Motor neuron (in vitro differentiated cells): ENCODE measurements at regions of chr4 and their contacts with region 1.

Region 1: DNA sequence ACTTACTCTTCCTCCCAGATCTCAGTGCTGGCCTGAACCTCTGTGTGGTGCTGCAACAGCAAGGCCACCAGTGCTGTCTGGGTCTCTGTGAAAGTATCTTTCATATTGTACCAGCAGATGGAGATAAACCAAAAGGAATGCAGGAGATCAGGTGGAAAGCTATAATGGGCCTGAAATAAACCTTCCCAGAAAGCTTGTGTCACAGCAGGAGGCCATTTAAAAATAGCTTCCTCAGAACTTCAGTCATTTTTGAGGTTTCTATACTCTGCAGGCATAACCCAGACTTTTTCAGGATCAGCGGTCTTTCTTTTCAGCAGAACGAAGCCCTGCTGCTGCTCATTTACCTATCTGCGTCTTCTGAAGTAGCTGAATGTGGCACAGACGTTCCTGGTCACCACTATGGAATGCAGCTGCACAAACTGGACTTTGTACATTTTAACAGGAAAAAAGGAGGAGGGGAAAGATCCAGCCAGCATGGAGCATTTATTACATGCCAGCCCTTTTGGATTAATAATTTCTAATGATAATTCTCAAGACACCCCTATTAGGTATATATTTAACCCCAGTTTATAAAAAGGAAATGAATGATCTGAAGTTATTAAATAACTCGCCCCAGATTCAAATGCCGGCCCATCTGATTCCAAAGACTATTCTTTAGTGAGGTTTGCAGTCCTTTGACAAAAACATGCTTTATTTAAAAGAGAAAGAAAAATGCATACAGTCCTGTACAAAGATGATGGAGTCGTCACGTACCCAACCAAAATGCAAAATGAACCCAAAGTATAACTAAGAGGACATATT is 119.7 kb downstream of the NFKB1 start:
- ATAC-seq: peak; percentile 78 to 95 (median 87)
- H3K4me3 ChIP-seq: no peak overlapping the region
- H3K27ac ChIP-seq: no peak overlapping the region
- H3K4me1 ChIP-seq: no peaks in the 10 kb centered on the region

Region 2: GRCh38 chr4:101630319-101630986 is 990.4 kb before region 1 on chr4:
- in situ Hi-C with region 1: no loop called
- ATAC-seq: no peak
- H3K4me3 ChIP-seq: no peak overlapping the region
- H3K27ac ChIP-seq: no peak overlapping the region
- H3K4me1 ChIP-seq: no peaks in the 10 kb centered on the region

Region 3: DNA sequence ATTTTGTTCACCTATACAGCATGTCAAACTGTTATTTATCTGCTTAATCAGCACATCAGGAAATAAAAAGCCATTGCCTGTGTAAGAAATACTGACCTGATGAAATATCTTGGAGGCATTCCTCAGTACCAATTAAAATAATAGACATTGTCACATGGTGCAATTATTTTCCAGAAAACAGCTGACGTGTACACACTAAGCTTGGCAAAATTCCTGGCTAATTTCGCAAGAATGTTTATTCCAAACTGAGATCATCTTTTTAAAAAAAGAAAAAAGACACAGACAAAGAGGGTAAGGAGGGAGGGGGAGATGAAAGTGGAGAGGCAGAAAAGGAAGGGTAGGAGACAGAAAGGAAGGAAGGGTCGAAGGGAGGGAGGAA is 181.7 kb before region 1 on chr4:
- in situ Hi-C with region 1: no loop called
- ATAC-seq: peak; percentile 61 to 86 (median 72)
- H3K4me3 ChIP-seq: no peak overlapping the region
- H3K27ac ChIP-seq: peak overlapping the region in 1 of 2 donors; percentile 25
- H3K4me1 ChIP-seq: peaks cover 4 to 14% of the 10 kb centered on the region in 2 donors

Region 4: DNA sequence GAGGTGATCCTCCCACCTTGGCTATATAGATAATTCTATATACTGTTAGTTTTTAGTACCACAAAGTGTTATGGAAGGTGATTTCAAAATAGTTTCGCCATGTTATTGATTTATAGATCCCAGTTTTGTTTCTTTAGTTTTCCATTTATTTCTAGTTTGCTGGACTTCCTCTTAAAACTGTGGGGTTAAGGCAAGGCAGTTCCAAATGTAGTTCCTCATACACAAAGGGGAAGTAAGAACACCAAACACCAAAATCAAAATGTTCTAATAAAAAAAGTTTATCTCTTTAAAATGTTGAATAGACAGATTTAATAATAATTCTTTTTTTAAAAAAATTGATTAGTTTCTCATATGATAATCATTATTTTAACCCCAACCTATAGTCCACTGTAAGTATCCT is 241.1 kb after region 1 on chr4:
- in situ Hi-C with region 1: no loop called
- ATAC-seq: no peak
- H3K4me3 ChIP-seq: no peak overlapping the region
- H3K27ac ChIP-seq: no peak overlapping the region
- H3K4me1 ChIP-seq: peaks cover 0 to 6% of the 10 kb centered on the region in 2 donors

Region 5: DNA sequence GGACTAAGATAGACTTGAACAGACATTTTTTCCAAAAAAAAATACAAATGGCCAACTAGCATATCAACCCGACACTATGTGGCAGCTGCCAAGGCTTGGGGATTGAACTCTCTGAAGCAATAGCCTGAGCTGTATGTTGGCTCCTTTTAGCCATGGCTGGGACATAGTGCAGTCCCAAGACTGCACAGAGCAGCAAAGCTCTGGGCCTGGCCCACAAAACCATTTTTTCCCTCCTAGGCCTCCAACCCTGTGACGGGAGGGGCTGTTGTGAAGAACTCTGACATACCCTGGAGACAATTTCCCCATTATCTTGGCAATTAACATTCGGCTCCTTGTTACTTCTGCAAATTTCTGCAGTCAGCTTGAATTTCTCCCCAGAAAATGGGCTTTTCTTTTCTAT is 298.0 kb after region 1 on chr4:
- in situ Hi-C with region 1: no loop called
- ATAC-seq: no peak
- H3K4me3 ChIP-seq: no peak overlapping the region
- H3K27ac ChIP-seq: no peak overlapping the region
- H3K4me1 ChIP-seq: no peaks in the 10 kb centered on the region

Region 6: DNA sequence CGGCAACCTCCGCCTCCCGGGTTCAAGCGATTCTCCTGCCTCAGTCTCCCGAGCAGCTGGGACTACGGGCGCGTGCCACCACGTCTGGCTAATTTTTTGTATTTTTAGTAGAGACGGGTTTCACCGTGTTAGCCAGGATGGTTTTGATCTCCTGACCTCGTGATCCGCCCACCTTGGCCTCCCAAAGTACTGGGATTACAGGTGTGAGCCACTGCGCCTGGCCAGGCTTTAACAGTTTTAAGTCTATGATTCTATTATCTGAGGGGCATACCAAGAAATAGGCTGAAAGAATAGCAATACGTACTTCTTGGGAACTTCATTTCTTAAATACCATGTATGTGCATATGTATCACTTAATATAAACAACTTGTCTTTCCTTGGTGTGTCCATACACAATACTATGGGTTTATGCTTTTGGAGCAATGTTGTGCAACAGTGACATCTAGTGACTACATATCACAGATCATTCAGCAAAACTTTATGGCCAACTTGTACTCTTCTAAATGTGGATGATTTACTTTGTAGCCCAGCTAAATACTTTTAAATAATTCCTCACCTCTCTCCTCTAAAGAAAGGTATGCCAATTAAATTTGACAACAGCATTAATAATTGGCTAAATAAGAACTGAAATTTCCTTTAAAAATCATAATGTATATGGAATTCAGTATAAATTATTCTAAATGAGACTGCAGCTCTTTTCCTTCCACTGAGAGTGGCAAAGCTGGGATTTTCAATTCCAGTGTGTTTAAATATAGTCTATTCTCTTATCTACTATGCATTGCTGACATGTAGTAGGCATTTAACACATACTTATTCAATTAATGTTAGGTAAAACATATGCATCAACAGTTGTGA is 388.2 kb after region 1 on chr4:
- in situ Hi-C with region 1: loop called in 3 of 9 experiments (anchors 10 to 25 kb)
- ATAC-seq: peak; percentile 42 to 82 (median 64)
- H3K4me3 ChIP-seq: no peak overlapping the region
- H3K27ac ChIP-seq: no peak overlapping the region
- H3K4me1 ChIP-seq: no peaks in the 10 kb centered on the region

Region 7: DNA sequence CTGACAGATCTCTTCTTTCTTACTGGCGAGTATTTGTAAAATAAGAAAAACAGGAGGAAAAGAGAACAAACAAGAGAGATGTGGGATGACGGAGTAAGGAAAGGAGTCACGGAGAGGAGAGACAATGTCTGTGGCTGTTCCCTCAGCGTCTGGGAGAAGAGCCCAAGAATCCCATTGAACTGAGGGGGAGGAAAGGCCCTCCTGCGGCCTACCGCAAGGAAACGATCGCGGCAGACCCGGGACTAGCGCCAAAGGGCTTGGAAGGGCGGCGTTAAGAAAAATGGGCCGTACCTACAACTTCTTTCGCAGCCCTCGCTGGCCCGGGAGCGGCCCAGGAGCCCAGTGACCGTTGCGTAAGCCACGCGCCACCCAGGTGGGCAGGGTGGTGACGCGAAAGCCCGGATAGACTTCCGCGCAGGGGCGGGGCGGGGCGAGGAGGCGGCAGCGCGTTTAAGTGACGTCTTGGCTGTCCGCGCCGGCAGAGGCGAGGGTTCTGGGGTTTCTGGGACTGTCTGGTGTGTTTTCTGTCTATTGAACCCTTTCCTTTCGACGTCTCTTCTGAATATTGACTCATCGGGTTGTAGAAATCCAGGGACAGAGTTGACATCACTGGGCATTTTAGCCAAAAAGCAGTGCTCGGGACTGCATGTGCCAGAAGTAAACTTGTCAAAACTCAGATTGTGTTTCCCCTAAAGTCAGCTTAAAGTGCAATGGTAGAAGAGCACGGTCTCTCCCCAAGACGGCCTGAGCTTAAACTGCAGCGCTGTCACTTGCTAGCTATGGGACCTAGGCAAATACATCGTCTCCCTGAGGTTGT is 398.6 kb after region 1 on chr4 and contains the start of gene SLC9B1:
- in situ Hi-C with region 1: loop called in 1 of 9 experiments (anchors 25 kb)
- ATAC-seq: peak; percentile 57 to 99 (median 93)
- H3K4me3 ChIP-seq: peak within 1 kb of the TSS in 3 of 5 donors; percentile 16 to 27 (median 23)
- H3K27ac ChIP-seq: no peak within 1 kb of the TSS
- H3K4me1 ChIP-seq: no peaks in the 10 kb centered on the region
- total RNA-seq, gene SLC9B1: 0.28 to 9.1 (median 0.81) TPM

Region 8: GRCh38 chr4:103099691-103100392 is 478.9 kb after region 1 on chr4 and contains the start of gene BDH2:
- in situ Hi-C with region 1: loop called in 1 of 9 experiments (anchors 25 kb)
- ATAC-seq: peak; percentile 90 to 96 (median 93)
- H3K4me3 ChIP-seq: peak within 1 kb of the TSS; percentile 31 to 40 (median 35)
- H3K27ac ChIP-seq: no peak within 1 kb of the TSS
- H3K4me1 ChIP-seq: peaks cover 0 to 4% of the 10 kb centered on the region in 2 donors
- total RNA-seq, gene BDH2: 17.0 to 91.9 (median 34.3) TPM